ENCODE measurements at regions of chr17 and their contacts with region 1.

Region 1: GRCh38 chr17:32006957-32007462 is at the start of gene LRRC37B:
- DNase-seq: peak; percentile 76 to 94 (median 89)
- ATAC-seq: peak; percentile 88
- H3K4me3 ChIP-seq: peak within 1 kb of the TSS; percentile 93
- H3K4me3 Mint-ChIP-seq: peak within 1 kb of the TSS; percentile 94
- H3K27ac ChIP-seq: peak within 1 kb of the TSS; percentile 17 to 47
- H3K27ac Mint-ChIP-seq: peak within 1 kb of the TSS; percentile 90
- H3K4me1 ChIP-seq: peaks cover 30% of the 10 kb centered on the region
- H3K4me1 Mint-ChIP-seq: peaks cover 37% of the 10 kb centered on the region
- H3K27me3 ChIP-seq: no peaks in the 10 kb centered on the region
- H3K27me3 Mint-ChIP-seq: no peaks in the 10 kb centered on the region
- CTCF ChIP-seq: peak; percentile 80
- total RNA-seq, gene LRRC37B: 68.8 to 75.2 TPM

Region 2: GRCh38 chr17:31900877-31901276 is 106.1 kb before region 1 on chr17:
- CTCF ChIA-PET with region 1: no interaction called
- POLR2A ChIA-PET with region 1: interaction called, 11 read pairs
- intact Hi-C with region 1: loop called in 1 of 2 experiments (anchors 5 kb)
- DNase-seq: no peak
- ATAC-seq: no peak
- H3K4me3 ChIP-seq: peak overlapping the region; percentile 89
- H3K4me3 Mint-ChIP-seq: no peak overlapping the region
- H3K27ac ChIP-seq: peak overlapping the region; percentile 46 to 68
- H3K27ac Mint-ChIP-seq: no peak overlapping the region
- H3K4me1 ChIP-seq: peaks cover 17% of the 10 kb centered on the region
- H3K4me1 Mint-ChIP-seq: peaks cover 9% of the 10 kb centered on the region
- H3K27me3 ChIP-seq: no peaks in the 10 kb centered on the region
- H3K27me3 Mint-ChIP-seq: no peaks in the 10 kb centered on the region
- CTCF ChIP-seq: no peak

Region 3: GRCh38 chr17:31931756-31932155 is 75.3 kb before region 1 on chr17:
- CTCF ChIA-PET with region 1: interaction called, 3 read pairs
- POLR2A ChIA-PET with region 1: no interaction called
- intact Hi-C with region 1: loop called in 1 of 2 experiments (anchors 5 kb)
- DNase-seq: no peak
- ATAC-seq: no peak
- H3K4me3 ChIP-seq: no peak overlapping the region
- H3K4me3 Mint-ChIP-seq: no peak overlapping the region
- H3K27ac ChIP-seq: no peak overlapping the region
- H3K27ac Mint-ChIP-seq: no peak overlapping the region
- H3K4me1 ChIP-seq: peaks cover 6% of the 10 kb centered on the region
- H3K4me1 Mint-ChIP-seq: no peaks in the 10 kb centered on the region
- H3K27me3 ChIP-seq: no peaks in the 10 kb centered on the region
- H3K27me3 Mint-ChIP-seq: no peaks in the 10 kb centered on the region
- CTCF ChIP-seq: no peak

Region 4: GRCh38 chr17:32136856-32137255 is 129.8 kb after region 1 on chr17:
- CTCF ChIA-PET with region 1: interaction called, 11 read pairs
- POLR2A ChIA-PET with region 1: interaction called, 16 read pairs
- intact Hi-C with region 1: loop called (anchors 2 to 5 kb)
- DNase-seq: peak in 1 of 14 experiments; percentile 33
- ATAC-seq: no peak
- H3K4me3 ChIP-seq: no peak overlapping the region
- H3K4me3 Mint-ChIP-seq: no peak overlapping the region
- H3K27ac ChIP-seq: no peak overlapping the region
- H3K27ac Mint-ChIP-seq: no peak overlapping the region
- H3K4me1 ChIP-seq: peaks cover 8% of the 10 kb centered on the region
- H3K4me1 Mint-ChIP-seq: peaks cover 22% of the 10 kb centered on the region
- H3K27me3 ChIP-seq: no peaks in the 10 kb centered on the region
- H3K27me3 Mint-ChIP-seq: no peaks in the 10 kb centered on the region
- CTCF ChIP-seq: no peak

Region 5: DNA sequence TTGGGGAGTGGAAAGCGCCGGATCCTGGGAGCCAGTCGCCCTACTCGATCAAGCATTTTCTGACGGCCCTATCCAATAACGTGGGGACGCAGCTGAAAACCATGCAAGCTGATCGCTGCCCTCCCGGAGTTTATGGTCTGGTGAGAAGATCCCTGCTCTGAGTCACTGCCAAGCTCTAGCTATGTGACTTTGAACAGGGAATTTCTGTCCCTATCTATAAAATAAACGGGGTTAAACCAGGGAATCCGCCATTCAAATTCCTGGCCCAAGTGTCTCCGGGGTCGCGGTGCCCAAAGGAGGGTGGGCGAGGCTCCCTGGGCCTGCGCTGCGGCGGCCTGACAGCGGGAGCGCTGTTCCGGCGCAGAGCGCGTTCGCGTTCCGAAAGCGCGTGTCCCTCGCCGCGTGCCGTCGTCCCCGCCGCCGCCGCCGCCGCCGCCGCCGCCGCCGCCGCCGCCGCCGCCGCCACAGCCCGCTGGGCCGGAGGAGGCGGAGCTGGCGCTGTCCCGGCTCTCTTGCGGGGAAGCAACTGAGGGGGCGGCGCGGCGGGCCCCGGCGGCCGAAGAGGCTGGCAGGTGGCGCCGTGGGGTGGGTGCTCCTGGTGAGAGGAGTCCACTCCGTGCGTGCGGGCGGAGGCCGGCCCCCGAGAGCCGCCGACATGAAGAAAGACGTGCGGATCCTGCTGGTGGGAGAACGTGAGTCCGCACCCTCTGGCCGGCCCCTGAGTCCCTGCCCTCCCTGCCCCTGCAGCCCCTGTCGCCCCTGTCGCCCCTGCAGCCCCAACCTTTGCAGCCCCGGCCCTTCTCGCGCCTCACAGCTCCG is 135.2 kb after region 1 on chr17 and contains the start of gene RHOT1:
- CTCF ChIA-PET with region 1: interaction called, 11 read pairs
- POLR2A ChIA-PET with region 1: interaction called, 16 read pairs
- intact Hi-C with region 1: loop called (anchors 2 to 5 kb)
- DNase-seq: peak; percentile 53 to 90 (median 69)
- ATAC-seq: peak; percentile 83
- H3K4me3 ChIP-seq: peak within 1 kb of the TSS; percentile 88
- H3K4me3 Mint-ChIP-seq: peak within 1 kb of the TSS; percentile 91
- H3K27ac ChIP-seq: peak within 1 kb of the TSS; percentile 2 to 37
- H3K27ac Mint-ChIP-seq: peak within 1 kb of the TSS; percentile 86
- H3K4me1 ChIP-seq: peaks cover 38% of the 10 kb centered on the region
- H3K4me1 Mint-ChIP-seq: peaks cover 37% of the 10 kb centered on the region
- H3K27me3 ChIP-seq: no peaks in the 10 kb centered on the region
- H3K27me3 Mint-ChIP-seq: no peaks in the 10 kb centered on the region
- CTCF ChIP-seq: peak; percentile 63
- total RNA-seq, gene RHOT1: 12.9 to 13.1 TPM

Region 6: DNA sequence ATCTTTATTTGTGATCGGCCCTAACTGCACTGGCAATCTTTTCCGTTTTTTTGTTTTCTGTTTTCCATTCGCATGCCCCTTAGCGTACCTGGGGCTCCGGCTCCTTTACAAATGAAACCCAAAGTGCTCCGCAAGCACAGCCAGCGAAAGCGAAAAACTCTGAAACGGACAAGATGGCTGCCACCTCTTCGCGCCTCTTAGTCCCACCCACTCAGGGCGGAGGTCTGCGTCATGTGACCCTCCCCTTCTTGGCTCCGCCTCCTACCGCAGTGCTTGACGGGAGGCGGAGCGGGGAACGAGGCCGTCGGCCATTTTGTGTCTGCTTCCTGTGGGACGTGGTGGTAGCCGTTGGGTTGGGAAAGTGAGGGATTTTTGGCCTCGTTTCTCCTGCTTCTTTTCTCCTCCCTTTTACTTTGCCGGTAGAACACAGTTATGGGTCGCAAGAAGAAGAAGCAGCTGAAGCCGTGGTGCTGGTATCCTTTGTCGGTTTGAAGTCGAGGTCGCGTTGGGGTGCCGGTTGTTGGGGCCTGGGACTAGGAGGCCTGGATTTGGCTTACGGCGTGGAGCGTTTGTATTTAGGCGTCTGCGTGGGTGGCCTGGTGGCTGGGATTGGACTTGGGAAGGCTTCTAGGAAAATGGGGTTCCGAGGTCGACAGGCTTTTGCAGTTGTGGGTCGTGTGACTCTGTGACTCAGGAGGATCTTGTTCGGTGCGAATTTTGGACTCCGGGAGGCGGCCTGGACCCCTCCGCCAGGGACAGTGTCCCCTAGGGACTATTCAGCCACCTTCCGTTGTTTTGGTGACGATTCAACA is 343.1 kb after region 1 on chr17 and contains the start of gene ZNF207:
- CTCF ChIA-PET with region 1: no interaction called
- POLR2A ChIA-PET with region 1: no interaction called
- intact Hi-C with region 1: loop called in 1 of 2 experiments (anchors 10 kb)
- DNase-seq: peak; percentile 90 to 98 (median 93)
- ATAC-seq: peak; percentile 97
- H3K4me3 ChIP-seq: peak within 1 kb of the TSS; percentile 91
- H3K4me3 Mint-ChIP-seq: peak within 1 kb of the TSS; percentile 95
- H3K27ac ChIP-seq: peak within 1 kb of the TSS; percentile 98 to 99
- H3K27ac Mint-ChIP-seq: peak within 1 kb of the TSS; percentile 95
- H3K4me1 ChIP-seq: peaks cover 44% of the 10 kb centered on the region
- H3K4me1 Mint-ChIP-seq: peaks cover 41% of the 10 kb centered on the region
- H3K27me3 ChIP-seq: no peaks in the 10 kb centered on the region
- H3K27me3 Mint-ChIP-seq: no peaks in the 10 kb centered on the region
- CTCF ChIP-seq: no peak
- total RNA-seq, gene ZNF207: 252 to 262 TPM

Measured in CD4-positive, alpha-beta T cell (primary cell).